B cell (primary cell): ENCODE measurements at regions of chr7 and their contacts with region 1.

Region 1: GRCh38 chr7:38222481-38223096 is 44.5 kb downstream of the STARD3NL start:
- DNase-seq: peak; percentile 72
- ATAC-seq: peak; percentile 74
- H3K4me3 ChIP-seq: no peak overlapping the region
- H3K4me3 Mint-ChIP-seq: no peak overlapping the region
- H3K27ac ChIP-seq: no peak overlapping the region
- H3K27ac Mint-ChIP-seq: no peak overlapping the region
- H3K4me1 ChIP-seq: no peaks in the 10 kb centered on the region
- H3K4me1 Mint-ChIP-seq: peaks cover 2% of the 10 kb centered on the region
- H3K27me3 ChIP-seq: no peaks in the 10 kb centered on the region
- H3K27me3 Mint-ChIP-seq: no peaks in the 10 kb centered on the region
- CTCF ChIP-seq: peak; percentile 96

Region 2: GRCh38 chr7:37916673-37917660 is 305.6 kb before region 1 on chr7 and contains the start of gene SFRP4:
- CTCF ChIA-PET with region 1: no interaction called
- POLR2A ChIA-PET with region 1: no interaction called
- intact Hi-C with region 1: loop called (anchors 1 kb)
- DNase-seq: peak; percentile 38
- ATAC-seq: no peak
- H3K4me3 ChIP-seq: peak within 1 kb of the TSS in 2 of 5 experiments; percentile 8 to 11
- H3K4me3 Mint-ChIP-seq: peak within 1 kb of the TSS; percentile 53
- H3K27ac ChIP-seq: no peak within 1 kb of the TSS
- H3K27ac Mint-ChIP-seq: no peak within 1 kb of the TSS
- H3K4me1 ChIP-seq: peaks cover 27% of the 10 kb centered on the region in 2 donors
- H3K4me1 Mint-ChIP-seq: peaks cover 29% of the 10 kb centered on the region
- H3K27me3 ChIP-seq: peaks cover 0 to 35% (median 21%) of the 10 kb centered on the region in 4 experiments
- H3K27me3 Mint-ChIP-seq: peaks cover 65% of the 10 kb centered on the region
- CTCF ChIP-seq: peak; percentile 48
- total RNA-seq, gene SFRP4: not detected in 2 replicates

Region 3: GRCh38 chr7:37987732-37988131 is 234.9 kb before region 1 on chr7:
- CTCF ChIA-PET with region 1: no interaction called
- POLR2A ChIA-PET with region 1: no interaction called
- intact Hi-C with region 1: no loop called
- DNase-seq: no peak
- ATAC-seq: no peak
- H3K4me3 ChIP-seq: no peak overlapping the region
- H3K4me3 Mint-ChIP-seq: no peak overlapping the region
- H3K27ac ChIP-seq: no peak overlapping the region
- H3K27ac Mint-ChIP-seq: no peak overlapping the region
- H3K4me1 ChIP-seq: no peaks in the 10 kb centered on the region
- H3K4me1 Mint-ChIP-seq: no peaks in the 10 kb centered on the region
- H3K27me3 ChIP-seq: no peaks in the 10 kb centered on the region
- H3K27me3 Mint-ChIP-seq: peaks cover 7% of the 10 kb centered on the region
- CTCF ChIP-seq: no peak

Region 4: DNA sequence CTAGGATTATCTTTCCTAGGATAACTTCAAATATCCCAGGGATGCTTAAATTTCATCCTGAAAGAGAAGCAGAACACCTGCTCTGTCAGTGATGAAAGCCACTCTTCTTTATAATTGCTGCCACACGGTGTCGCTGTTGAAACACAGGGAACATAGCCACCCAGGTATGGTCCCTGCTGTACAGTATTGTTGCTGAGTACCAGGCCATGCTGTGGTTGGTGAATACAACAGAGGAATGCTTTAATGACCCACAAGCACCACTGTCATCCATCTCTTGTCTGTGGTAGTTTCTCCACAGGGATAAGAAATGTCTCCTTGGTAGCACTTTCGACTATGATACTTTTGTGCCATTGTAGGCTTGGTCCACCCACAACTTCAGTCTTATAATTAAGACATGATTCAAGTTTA is 115.1 kb before region 1 on chr7:
- CTCF ChIA-PET with region 1: interaction called, 162 read pairs
- POLR2A ChIA-PET with region 1: no interaction called
- intact Hi-C with region 1: loop called (anchors 1 kb)
- DNase-seq: peak; percentile 69
- ATAC-seq: peak; percentile 57
- H3K4me3 ChIP-seq: no peak overlapping the region
- H3K4me3 Mint-ChIP-seq: no peak overlapping the region
- H3K27ac ChIP-seq: no peak overlapping the region
- H3K27ac Mint-ChIP-seq: no peak overlapping the region
- H3K4me1 ChIP-seq: no peaks in the 10 kb centered on the region
- H3K4me1 Mint-ChIP-seq: no peaks in the 10 kb centered on the region
- H3K27me3 ChIP-seq: peaks cover 0 to 4% (median 2%) of the 10 kb centered on the region in 4 experiments
- H3K27me3 Mint-ChIP-seq: peaks cover 35% of the 10 kb centered on the region
- CTCF ChIP-seq: peak; percentile 94

Region 5: DNA sequence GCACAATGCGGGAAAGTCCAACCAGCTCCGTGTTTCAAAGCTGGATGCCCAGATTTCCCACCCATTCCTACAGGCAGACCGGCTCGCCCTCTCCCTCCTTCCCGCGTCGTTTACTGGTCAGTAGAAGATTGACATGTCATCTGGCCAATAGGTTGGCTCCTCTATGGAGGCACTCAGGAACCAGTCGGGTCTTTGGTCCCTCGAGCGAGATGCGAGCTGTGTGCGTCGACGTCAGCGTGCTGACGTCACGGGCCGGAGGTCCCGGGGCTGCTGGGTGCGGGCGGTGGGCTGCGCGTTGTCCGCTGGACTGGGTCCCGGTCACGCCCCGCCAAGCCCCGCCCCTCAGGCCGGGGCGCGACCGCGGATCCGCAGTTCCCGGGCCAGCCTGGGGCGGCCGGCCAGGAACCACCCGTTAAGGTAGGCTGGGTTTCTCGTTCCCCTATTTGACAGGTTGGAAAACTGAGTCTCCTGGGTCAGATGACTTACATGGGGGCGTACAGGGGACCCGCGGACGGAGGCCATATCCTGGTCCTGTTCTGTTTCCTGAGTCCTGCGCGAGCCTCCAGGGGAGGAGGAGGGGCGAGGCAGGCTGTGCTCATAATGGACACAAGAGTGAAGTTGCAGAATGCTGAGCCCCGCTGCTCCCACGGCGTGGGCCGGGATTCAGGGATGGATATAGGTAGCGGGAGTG is 44.4 kb before region 1 on chr7 and contains the start of gene STARD3NL:
- CTCF ChIA-PET with region 1: interaction called, 3 read pairs
- POLR2A ChIA-PET with region 1: no interaction called
- intact Hi-C with region 1: loop called (anchors 2 kb)
- DNase-seq: peak; percentile 98
- ATAC-seq: peak; percentile 95
- H3K4me3 ChIP-seq: peak within 1 kb of the TSS; percentile 36 to 98 (median 91)
- H3K4me3 Mint-ChIP-seq: peak within 1 kb of the TSS; percentile 97
- H3K27ac ChIP-seq: peak within 1 kb of the TSS; percentile 81 to 93
- H3K27ac Mint-ChIP-seq: peak within 1 kb of the TSS; percentile 95
- H3K4me1 ChIP-seq: peaks cover 16 to 17% of the 10 kb centered on the region in 2 donors
- H3K4me1 Mint-ChIP-seq: peaks cover 33% of the 10 kb centered on the region
- H3K27me3 ChIP-seq: no peaks in the 10 kb centered on the region
- H3K27me3 Mint-ChIP-seq: no peaks in the 10 kb centered on the region
- CTCF ChIP-seq: no peak
- total RNA-seq, gene STARD3NL: 13.4 and 14.2 TPM in 2 replicates

Region 6: DNA sequence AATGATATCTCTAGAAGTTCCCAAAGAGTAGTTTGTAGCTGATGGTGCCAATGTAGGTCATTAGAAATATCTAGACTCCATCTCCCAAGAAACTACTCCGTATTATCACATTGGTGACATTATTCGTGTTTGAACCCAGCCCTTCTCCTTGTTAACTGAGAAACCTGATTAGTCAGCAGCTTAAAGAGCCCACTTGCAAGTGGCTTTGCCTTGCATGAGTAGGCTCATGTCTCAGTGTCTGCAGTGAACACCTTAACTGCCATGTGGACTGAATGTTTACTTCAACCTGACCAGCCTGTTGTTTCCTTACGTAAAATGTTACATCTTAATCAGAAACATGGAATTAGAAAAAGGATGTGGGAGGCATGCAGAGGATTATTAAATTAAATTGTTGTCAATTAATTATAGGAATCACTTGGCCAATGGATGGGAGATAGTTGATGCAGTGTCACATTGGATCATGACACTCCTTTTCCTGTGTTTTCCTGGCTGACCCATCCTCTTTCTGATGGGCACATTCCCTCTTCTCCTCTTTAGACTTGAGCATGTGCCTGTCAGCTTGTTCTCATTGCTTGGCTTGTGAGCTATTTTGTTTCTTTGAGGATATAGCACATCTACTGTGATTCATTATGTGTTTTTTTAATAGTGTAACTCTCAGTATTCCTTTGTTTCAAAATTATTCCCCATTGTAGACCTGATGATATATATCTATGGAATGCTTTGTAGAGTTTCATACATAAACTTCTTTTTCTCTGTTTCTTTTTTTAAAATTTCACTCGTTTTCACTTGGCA is 26.6 kb before region 1 on chr7:
- CTCF ChIA-PET with region 1: interaction called, 11 read pairs
- POLR2A ChIA-PET with region 1: no interaction called
- intact Hi-C with region 1: no loop called
- DNase-seq: no peak
- ATAC-seq: no peak
- H3K4me3 ChIP-seq: no peak overlapping the region
- H3K4me3 Mint-ChIP-seq: no peak overlapping the region
- H3K27ac ChIP-seq: no peak overlapping the region
- H3K27ac Mint-ChIP-seq: no peak overlapping the region
- H3K4me1 ChIP-seq: no peaks in the 10 kb centered on the region
- H3K4me1 Mint-ChIP-seq: peaks cover 27% of the 10 kb centered on the region
- H3K27me3 ChIP-seq: no peaks in the 10 kb centered on the region
- H3K27me3 Mint-ChIP-seq: no peaks in the 10 kb centered on the region
- CTCF ChIP-seq: no peak

Region 7: DNA sequence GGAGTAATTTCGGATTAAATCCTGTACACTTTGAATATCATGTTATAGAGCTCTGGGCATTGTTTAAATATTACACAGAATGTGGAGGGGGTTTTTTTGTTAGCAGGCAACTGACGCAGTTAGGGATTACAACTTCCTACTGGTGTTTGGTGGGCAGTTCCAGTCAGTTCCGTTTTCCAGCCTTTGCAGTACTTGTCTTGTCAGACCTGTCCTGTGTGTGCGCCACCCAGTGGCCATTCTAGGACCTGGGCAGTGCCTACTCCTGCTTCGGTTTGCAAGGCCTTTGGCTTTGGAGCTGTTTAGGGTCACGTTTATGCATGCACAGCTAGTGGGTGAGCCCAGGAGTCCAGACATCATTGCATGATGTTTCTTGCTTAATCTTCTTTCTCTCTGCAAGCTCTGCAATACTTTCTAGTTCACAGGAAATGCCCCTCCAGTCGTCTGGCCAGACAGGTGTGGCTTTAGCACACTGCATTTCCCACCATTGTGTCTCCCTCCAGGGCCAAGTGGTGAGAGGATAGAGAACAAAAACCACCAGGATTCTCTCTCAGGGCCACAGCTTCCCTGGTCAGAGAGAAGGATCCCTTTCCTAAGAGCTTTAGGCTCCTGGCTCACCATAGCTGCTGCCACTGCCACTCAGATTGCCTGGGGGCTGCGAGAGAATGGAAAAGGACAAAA is 147.4 kb after region 1 on chr7:
- CTCF ChIA-PET with region 1: interaction called, 49 read pairs
- POLR2A ChIA-PET with region 1: no interaction called
- intact Hi-C with region 1: no loop called
- DNase-seq: peak; percentile 87
- ATAC-seq: peak; percentile 80
- H3K4me3 ChIP-seq: no peak overlapping the region
- H3K4me3 Mint-ChIP-seq: peak overlapping the region; percentile 2
- H3K27ac ChIP-seq: peak overlapping the region in 1 of 2 donors; percentile 32
- H3K27ac Mint-ChIP-seq: no peak overlapping the region
- H3K4me1 ChIP-seq: peaks cover 10 to 25% of the 10 kb centered on the region in 2 donors
- H3K4me1 Mint-ChIP-seq: peaks cover 18% of the 10 kb centered on the region
- H3K27me3 ChIP-seq: no peaks in the 10 kb centered on the region
- H3K27me3 Mint-ChIP-seq: no peaks in the 10 kb centered on the region
- CTCF ChIP-seq: peak; percentile 74

Region 8: GRCh38 chr7:38863601-38864291 is 641.2 kb after region 1 on chr7:
- CTCF ChIA-PET with region 1: no interaction called
- POLR2A ChIA-PET with region 1: no interaction called
- intact Hi-C with region 1: no loop called
- DNase-seq: no peak
- ATAC-seq: no peak
- H3K4me3 ChIP-seq: no peak overlapping the region
- H3K4me3 Mint-ChIP-seq: no peak overlapping the region
- H3K27ac ChIP-seq: no peak overlapping the region
- H3K27ac Mint-ChIP-seq: no peak overlapping the region
- H3K4me1 ChIP-seq: no peaks in the 10 kb centered on the region
- H3K4me1 Mint-ChIP-seq: peaks cover 5% of the 10 kb centered on the region
- H3K27me3 ChIP-seq: no peaks in the 10 kb centered on the region
- H3K27me3 Mint-ChIP-seq: no peaks in the 10 kb centered on the region
- CTCF ChIP-seq: no peak